ENCODE measurements at regions of chr18 and their contacts with region 1.

Region 1: GRCh38 chr18:21600526-21601410 is at the start of gene ESCO1:
- DNase-seq: peak; percentile 94 to 98
- ATAC-seq: peak; percentile 93 to 96
- H3K4me3 ChIP-seq: peak within 1 kb of the TSS; percentile 74 to 94 (median 85)
- H3K27ac ChIP-seq: peak within 1 kb of the TSS; percentile 92 to 97 (median 94)
- H3K4me1 ChIP-seq: peaks cover 28 to 31% of the 10 kb centered on the region in 2 donors
- H3K27me3 ChIP-seq: no peaks in the 10 kb centered on the region
- CTCF ChIP-seq: peak; percentile 98 to 100 (median 99)
- POLR2A ChIP-seq: peak; percentile 91 to 92
- total RNA-seq, gene ESCO1: 12.1 to 17.9 (median 17.4) TPM

Region 2: DNA sequence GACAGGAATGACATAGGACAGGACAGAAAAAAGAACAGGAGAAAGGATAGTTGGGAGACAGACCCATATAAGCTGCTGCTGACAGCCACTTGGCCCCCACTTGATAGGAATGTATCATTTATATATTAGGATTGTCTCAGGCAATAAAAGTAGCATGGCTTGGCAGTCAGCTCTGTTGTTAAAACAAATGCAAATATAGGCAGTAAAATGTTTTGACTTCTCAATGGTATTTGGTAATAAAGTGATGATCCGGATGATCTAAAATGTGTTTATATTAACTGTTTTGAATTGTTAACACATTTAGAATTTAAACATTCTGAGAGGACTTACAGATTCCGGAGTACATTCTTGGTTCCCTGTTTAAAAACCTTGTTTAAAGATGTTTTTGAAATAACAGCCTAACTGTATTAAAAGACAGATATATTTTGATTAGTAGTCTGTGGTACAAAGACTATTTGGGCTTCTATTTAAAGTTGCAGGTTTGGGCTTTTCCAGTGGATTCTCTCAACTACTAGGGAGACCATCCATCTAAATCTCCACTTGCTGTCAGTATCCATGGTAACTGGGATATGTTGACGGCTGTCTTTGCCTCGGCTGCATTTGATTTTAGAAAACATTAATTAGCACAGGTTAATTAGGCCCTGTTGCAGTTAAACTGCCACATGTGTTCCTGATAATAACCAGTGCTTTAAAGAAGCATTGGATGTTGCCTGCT is 147.8 kb before region 1 on chr18:
- in situ Hi-C with region 1: no loop called
- intact Hi-C with region 1: loop called (anchors 2 kb)
- DNase-seq: no peak
- ATAC-seq: no peak
- H3K4me3 ChIP-seq: no peak overlapping the region
- H3K27ac ChIP-seq: peak overlapping the region; percentile 90 to 96 (median 92)
- H3K4me1 ChIP-seq: peaks cover 62 to 75% of the 10 kb centered on the region in 2 donors
- H3K27me3 ChIP-seq: no peaks in the 10 kb centered on the region
- CTCF ChIP-seq: no peak
- POLR2A ChIP-seq: no peak

Region 3: DNA sequence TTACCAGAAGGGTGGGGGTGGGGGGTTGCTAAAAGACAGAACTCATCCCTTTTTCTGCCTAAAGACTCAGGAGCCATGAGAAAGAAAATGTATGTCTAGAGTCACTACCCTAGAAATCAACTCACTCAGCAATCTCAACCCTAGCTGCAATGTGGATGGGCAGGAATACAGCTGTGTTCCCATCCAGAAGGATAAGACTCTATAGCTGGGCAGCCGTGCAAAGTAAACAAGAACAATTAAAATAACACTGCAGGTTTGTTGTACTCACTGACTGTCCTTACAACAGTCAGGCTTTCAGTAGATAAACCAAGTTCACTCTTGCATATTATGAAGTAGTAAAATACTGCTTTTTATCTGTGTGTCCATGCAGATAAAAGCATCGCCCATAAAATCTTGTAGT is 74.3 kb before region 1 on chr18:
- in situ Hi-C with region 1: no loop called
- intact Hi-C with region 1: loop called (anchors 10 kb)
- DNase-seq: no peak
- ATAC-seq: no peak
- H3K4me3 ChIP-seq: no peak overlapping the region
- H3K27ac ChIP-seq: no peak overlapping the region
- H3K4me1 ChIP-seq: no peaks in the 10 kb centered on the region
- H3K27me3 ChIP-seq: no peaks in the 10 kb centered on the region
- CTCF ChIP-seq: no peak
- POLR2A ChIP-seq: no peak

Region 4: GRCh38 chr18:21672521-21673267 is 71.9 kb after region 1 on chr18:
- in situ Hi-C with region 1: no loop called
- intact Hi-C with region 1: no loop called
- DNase-seq: peak; percentile 9 to 47
- ATAC-seq: peak; percentile 85 to 88
- H3K4me3 ChIP-seq: no peak overlapping the region
- H3K27ac ChIP-seq: peak overlapping the region; percentile 55 to 74 (median 66)
- H3K4me1 ChIP-seq: peaks cover 3 to 14% of the 10 kb centered on the region in 2 donors
- H3K27me3 ChIP-seq: no peaks in the 10 kb centered on the region
- CTCF ChIP-seq: no peak
- POLR2A ChIP-seq: no peak

Region 5: DNA sequence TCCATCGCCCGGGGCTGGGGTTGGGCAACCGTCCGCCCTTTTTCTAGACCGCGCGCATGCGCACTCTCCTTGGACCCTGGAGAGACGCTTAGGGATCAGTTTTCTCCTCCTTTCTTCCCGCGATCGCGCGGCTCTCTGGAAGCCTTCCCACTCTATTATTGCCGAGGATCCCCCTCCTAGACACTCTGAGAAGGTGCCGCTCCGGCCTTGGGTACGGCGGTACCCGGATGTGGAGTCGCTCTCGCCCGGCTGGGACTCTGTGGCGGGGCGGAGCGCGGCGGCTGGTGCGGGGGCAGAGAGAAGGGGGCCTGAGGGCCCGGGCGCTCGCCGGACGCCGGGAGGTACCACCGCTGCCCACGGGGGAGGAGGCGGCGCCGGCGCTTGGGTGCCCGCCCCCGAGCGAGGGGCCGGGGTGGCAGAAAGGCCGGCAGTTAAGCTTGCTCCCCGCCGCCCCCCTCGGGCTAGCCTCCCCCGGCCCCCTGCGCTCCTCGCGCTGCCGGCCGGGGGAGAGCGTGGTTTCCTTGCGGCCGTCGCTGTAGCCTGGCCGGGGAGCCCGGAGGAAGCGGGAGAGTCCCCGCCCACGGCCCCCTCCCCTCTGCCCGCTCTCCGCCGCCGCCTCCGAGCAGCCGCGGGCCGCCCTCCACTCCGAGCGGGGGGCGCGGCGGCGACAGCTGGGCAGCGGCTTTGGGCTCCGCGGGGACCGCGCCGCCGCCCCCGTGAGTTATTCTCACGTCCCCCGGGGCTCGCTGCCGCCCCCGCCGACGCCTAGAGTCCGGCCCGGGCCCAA is 140.1 kb after region 1 on chr18 and contains the start of gene MIB1:
- in situ Hi-C with region 1: no loop called
- intact Hi-C with region 1: loop called (anchors 2 kb)
- DNase-seq: no peak
- ATAC-seq: peak; percentile 91 to 94
- H3K4me3 ChIP-seq: peak within 1 kb of the TSS; percentile 65 to 97 (median 81)
- H3K27ac ChIP-seq: peak within 1 kb of the TSS; percentile 92 to 99 (median 96)
- H3K4me1 ChIP-seq: peaks cover 30 to 37% of the 10 kb centered on the region in 2 donors
- H3K27me3 ChIP-seq: no peaks in the 10 kb centered on the region
- CTCF ChIP-seq: peak in 1 of 5 experiments; percentile 2
- POLR2A ChIP-seq: peak; percentile 84 to 88
- total RNA-seq, gene MIB1: 16.4 to 22.3 (median 21.6) TPM